A549 (cell line): ENCODE measurements at regions of chr1 and their contacts with region 1.

Region 1: DNA sequence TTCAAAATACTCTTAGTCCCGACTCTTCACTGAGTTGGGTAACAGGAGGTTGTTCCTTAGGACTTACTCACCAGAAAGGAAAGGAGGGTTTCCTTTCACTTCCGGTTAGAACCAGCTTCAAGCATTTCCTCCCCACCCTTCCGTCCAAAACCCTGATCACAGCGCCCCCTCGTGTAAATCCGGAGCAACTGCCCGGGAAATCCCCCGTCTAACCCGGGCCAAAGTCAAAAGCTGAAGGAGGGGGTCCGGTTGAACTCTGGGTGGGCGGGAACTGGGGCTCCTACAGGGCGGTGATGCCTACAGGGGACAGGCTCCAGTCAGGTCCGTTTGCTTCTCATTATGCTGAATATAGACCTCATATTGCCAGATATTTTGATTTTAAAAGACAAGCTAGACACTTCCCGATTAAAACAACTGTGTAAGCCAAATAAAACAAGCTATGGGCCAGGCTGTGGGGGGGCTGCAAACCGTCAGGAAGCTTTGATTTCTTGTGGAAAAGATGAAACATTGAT is 15.0 kb upstream of the MTARC2 start:
- DNase-seq: peak; percentile 80 to 89
- ATAC-seq: peak; percentile 79 to 88
- H3K4me3 ChIP-seq: peak overlapping the region; percentile 35; the same call in 2 of the 3 replicates
- H3K27ac ChIP-seq: peak overlapping the region; percentile 81 to 82
- H3K4me1 ChIP-seq: peaks cover 25% of the 10 kb centered on the region
- CTCF ChIP-seq: peak; percentile 79
- EP300 ChIP-seq: no peak
- POLR2A ChIP-seq: no peak
- RAD21 ChIP-seq: peak; percentile 68 to 70

Region 2: DNA sequence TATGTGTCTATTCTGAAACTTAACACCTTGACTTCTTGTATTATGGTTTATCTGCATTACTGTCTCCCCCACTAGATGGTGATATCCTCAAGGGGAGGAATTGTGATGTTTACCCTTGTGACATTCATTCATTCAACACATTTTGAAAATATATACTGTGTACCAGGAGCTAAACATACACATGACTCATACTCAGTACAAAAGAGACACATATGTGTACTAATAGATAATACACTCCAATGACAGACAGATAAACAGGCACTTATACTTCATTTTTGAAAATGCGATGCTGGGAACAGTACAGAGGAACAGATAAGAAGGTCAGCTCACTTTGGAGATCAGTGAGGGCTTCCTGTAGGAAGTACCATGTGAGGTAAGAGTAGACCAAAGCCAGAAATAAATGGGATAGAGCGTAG is 452.0 kb before region 1 on chr1:
- CTCF ChIA-PET with region 1: interaction called, 23 read pairs
- POLR2A ChIA-PET with region 1: no interaction called
- DNase-seq: peak; percentile 12 to 26
- ATAC-seq: peak; percentile 56 to 77; a peak in 5 of 6 replicates
- H3K4me3 ChIP-seq: no peak overlapping the region
- H3K27ac ChIP-seq: no peak overlapping the region
- H3K4me1 ChIP-seq: no peaks in the 10 kb centered on the region
- CTCF ChIP-seq: peak; percentile 43
- EP300 ChIP-seq: no peak
- POLR2A ChIP-seq: no peak
- RAD21 ChIP-seq: peak; percentile 55 to 62; a peak in 4 of 5 replicates

Region 3: GRCh38 chr1:220690140-220691025 is 42.8 kb before region 1 on chr1 and contains the start of gene C1orf115:
- CTCF ChIA-PET with region 1: interaction called, 11 read pairs
- POLR2A ChIA-PET with region 1: interaction called, 4 read pairs
- DNase-seq: peak; percentile 78 to 89
- ATAC-seq: peak; percentile 90 to 96
- H3K4me3 ChIP-seq: peak within 1 kb of the TSS; percentile 85
- H3K27ac ChIP-seq: peak within 1 kb of the TSS; percentile 83 to 93
- H3K4me1 ChIP-seq: no peaks in the 10 kb centered on the region
- CTCF ChIP-seq: peak; percentile 96
- EP300 ChIP-seq: no peak
- POLR2A ChIP-seq: peak; percentile 55
- RAD21 ChIP-seq: peak; percentile 47 to 73
- polyA plus RNA-seq, gene C1orf115: 6.4 and 6.9 TPM in 2 replicates

Region 4: DNA sequence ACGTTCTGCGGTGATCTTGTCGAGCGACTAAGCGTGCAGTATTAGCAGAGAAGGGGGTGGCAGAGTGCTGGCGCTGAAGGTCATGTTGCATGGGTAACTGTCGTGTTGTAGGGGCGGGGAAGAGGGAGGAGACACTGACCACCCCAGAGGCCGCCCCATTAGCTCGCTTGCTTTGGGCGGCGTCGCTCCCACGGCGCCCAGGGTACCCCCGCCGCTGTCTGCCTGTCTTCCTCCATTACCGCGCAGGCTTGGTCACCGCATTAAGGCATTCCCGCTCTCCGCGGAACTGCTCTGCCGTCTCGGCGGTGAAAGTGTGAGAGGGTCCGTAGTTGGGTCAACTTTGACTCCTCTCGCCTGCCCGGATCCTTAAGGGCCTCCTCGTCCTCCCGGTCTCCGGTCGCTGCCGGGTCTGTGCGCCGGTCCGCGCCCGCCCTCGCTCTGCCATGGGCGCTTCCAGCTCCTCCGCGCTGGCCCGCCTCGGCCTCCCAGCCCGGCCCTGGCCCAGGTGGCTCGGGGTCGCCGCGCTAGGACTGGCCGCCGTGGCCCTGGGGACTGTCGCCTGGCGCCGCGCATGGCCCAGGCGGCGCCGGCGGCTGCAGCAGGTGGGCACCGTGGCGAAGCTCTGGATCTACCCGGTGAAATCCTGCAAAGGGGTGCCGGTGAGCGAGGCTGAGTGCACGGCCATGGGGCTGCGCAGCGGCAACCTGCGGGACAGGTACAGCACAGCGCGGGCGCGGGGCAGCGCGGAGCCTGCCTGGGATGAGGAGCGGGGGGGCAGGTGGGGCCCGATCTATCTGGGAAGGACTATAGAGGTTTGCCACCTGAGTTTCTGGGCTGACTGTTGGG is 15.2 kb after region 1 on chr1 and contains the start of gene MTARC2:
- CTCF ChIA-PET with region 1: interaction called, 41 read pairs
- POLR2A ChIA-PET with region 1: interaction called, 35 read pairs
- DNase-seq: peak; percentile 75 to 82
- ATAC-seq: peak; percentile 97 to 98
- H3K4me3 ChIP-seq: peak within 1 kb of the TSS; percentile 86
- H3K27ac ChIP-seq: peak within 1 kb of the TSS; percentile 88 to 92
- H3K4me1 ChIP-seq: peaks cover 22% of the 10 kb centered on the region; the same call in 2 of the 3 replicates
- CTCF ChIP-seq: no peak
- EP300 ChIP-seq: no peak
- POLR2A ChIP-seq: peak; percentile 95
- RAD21 ChIP-seq: 0 out of 5 replicates have a peak, but pooled peaks of 1 of the 2 experiments have one; percentile 12
- polyA plus RNA-seq, gene MTARC2: 17.7 and 18.4 TPM in 2 replicates

Region 5: GRCh38 chr1:220761688-220762427 is 28.7 kb after region 1 on chr1:
- CTCF ChIA-PET with region 1: interaction called, 11 read pairs
- POLR2A ChIA-PET with region 1: no interaction called
- DNase-seq: no peak
- ATAC-seq: no peak
- H3K4me3 ChIP-seq: no peak overlapping the region
- H3K27ac ChIP-seq: no peak overlapping the region
- H3K4me1 ChIP-seq: no peaks in the 10 kb centered on the region
- CTCF ChIP-seq: no peak
- EP300 ChIP-seq: no peak
- POLR2A ChIP-seq: no peak
- RAD21 ChIP-seq: no peak